Psoas muscle (tissue), 8 donors: ENCODE measurements at regions of chr16 and their contacts with region 1.

Region 1: GRCh38 chr16:5379954-5380353 is 282.4 kb upstream of the EEF2KMT start:
- DNase-seq: no peak
- ATAC-seq: no peak
- H3K4me3 ChIP-seq: no peak overlapping the region
- H3K27ac ChIP-seq: no peak overlapping the region
- H3K4me1 ChIP-seq: no peaks in the 10 kb centered on the region
- H3K27me3 ChIP-seq: no peaks in the 10 kb centered on the region
- CTCF ChIP-seq: no peak

Region 2: GRCh38 chr16:5309946-5310611 is 69.9 kb before region 1 on chr16:
- intact Hi-C with region 1: loop called in 1 of 2 experiments (anchors 10 kb)
- DNase-seq: no peak
- ATAC-seq: no peak
- H3K4me3 ChIP-seq: no peak overlapping the region
- H3K27ac ChIP-seq: no peak overlapping the region
- H3K4me1 ChIP-seq: no peaks in the 10 kb centered on the region
- H3K27me3 ChIP-seq: no peaks in the 10 kb centered on the region
- CTCF ChIP-seq: no peak